ENCODE measurements at regions of chr12 and their contacts with region 1.

Region 1: GRCh38 chr12:120580787-120581723 is at the start of gene POP5:
- DNase-seq: peak; percentile 97 to 98
- H3K4me3 ChIP-seq: peak within 1 kb of the TSS; percentile 81
- CTCF ChIP-seq: no peak
- POLR2A ChIP-seq: no peak
- total RNA-seq, gene POP5: 7.5 to 26.9 (median 22.5) TPM

Region 2: DNA sequence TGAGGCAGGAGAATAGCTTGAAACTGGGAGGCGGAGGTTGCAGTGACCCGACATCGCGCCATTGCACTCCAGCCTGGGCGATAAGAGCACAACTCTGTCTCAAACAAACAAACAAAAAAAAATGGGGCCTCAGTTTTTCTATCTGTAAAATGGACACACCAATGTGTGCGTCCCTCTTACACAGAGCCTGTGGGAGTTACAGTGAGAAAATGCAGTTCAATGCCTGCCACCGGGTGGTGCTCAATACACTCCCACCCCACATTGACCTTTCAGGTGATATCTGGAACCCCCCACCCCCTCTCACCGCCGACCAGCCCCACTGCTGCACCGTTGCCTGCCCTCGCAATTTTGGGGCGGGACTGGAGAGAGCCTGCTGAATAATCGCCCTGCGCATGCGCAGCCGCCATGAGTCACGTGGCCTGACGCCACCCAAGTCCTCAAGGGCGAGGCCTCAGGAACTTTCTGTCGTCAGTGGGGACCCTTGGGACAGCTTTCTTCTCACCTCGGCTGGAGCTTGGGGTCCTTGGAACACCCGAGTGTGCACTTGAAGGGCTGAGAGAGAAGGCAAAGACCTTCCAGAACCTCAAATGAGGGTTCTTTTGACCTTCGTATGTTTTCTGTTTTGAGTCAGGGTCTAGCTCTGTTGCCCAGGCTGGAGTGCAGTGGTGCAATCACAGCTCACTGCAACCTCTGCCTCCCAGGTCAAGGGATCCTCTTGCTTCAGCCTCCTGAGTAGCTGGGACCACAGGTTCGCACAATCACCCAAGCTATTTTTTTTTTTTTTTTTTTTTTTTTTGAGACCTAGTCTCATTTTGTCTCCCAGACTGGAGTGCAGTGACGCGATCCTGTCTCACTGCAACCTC is 44.7 kb after region 1 on chr12:
- intact Hi-C with region 1: no loop called
- DNase-seq: no peak
- H3K4me3 ChIP-seq: no peak overlapping the region
- CTCF ChIP-seq: no peak
- POLR2A ChIP-seq: no peak

Region 3: DNA sequence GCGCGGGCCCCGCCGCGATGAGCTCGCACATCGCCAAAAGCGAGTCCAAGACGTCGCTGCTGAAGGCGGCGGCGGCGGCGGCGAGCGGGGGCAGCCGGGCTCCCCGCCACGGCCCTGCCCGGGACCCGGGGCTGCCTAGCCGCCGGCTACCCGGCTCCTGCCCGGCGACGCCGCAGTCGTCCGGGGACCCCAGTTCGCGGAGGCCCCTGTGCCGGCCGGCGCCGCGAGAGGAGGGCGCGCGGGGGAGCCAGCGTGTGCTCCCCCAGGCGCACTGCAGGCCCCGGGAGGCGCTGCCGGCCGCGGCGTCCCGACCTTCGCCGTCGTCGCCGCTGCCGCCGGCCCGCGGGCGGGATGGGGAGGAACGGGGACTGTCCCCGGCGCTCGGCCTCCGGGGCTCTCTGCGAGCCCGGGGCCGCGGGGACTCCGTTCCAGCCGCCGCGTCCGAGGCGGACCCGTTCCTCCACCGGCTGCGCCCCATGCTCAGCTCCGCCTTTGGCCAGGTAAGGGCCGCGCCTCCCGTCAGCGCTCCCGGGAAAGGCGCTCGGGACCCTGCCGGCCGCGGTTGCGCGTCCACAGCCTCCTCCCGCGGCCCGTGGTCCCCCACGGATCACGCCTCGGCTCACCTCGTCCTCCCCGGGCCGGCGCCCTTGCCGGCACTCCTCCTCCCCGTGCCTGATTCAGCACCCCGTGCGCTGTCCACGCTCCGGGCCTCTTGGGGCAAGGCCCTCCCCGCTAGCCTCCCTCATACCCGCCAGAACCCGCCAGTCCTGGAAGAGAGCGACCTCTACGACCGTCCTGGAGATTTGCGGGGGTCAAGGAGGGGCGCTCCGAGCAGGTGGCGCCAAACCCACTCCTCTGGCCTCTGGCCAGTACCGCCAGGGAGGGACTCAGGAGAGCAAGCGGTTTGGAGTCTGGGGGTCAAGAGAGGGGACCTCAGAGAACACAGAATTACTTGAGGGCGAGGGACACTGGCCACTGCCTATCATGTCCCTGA is 60.1 kb after region 1 on chr12:
- intact Hi-C with region 1: loop called (anchors 10 kb)
- DNase-seq: no peak
- H3K4me3 ChIP-seq: no peak overlapping the region
- CTCF ChIP-seq: no peak
- POLR2A ChIP-seq: no peak

Region 4: DNA sequence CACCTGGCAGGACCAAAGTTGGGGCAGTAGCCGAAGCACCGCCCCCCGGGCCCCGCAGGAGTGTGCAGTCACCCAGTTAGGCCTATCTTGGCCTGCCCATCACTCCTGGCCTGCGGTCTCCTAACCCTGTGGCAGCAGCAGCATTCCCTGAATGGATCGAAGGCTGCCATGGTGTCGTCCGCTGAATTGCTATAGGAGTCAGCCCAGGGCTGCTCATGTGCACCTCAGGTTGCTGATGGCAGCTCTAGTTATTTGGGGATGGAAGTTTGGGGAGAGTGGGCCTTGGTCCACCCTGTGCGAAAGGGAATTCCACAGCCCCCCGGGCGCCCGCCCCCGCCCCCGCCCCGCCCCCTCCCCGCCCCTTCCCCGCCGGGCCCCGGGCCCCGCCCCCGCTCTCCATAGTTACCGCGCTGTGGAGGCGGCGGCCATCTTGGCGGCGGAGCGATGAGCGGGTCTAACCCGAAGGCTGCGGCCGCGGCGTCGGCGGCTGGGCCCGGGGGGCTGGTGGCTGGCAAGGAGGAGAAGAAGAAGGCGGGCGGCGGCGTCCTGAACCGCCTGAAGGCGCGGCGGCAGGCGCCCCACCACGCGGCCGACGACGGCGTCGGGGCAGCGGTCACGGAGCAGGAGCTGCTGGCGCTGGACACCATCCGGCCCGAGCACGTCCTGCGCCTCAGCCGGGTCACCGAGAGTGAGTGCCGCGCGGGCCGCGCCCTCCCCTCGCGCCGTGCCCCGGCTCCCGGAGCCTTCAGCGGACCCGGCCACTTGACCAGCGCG is 129.2 kb after region 1 on chr12 and contains the start of gene UNC119B:
- intact Hi-C with region 1: loop called (anchors 10 kb)
- DNase-seq: peak; percentile 43 to 89
- H3K4me3 ChIP-seq: peak within 1 kb of the TSS; percentile 74
- CTCF ChIP-seq: no peak
- POLR2A ChIP-seq: no peak
- total RNA-seq, gene UNC119B: 5.0 to 20.3 (median 13.9) TPM

Measured in lower leg skin (tissue), 4 donors.